Naive thymus-derived CD4-positive, alpha-beta T cell (primary cell): ENCODE measurements at regions of chr9 and their contacts with region 1.

Region 1: DNA sequence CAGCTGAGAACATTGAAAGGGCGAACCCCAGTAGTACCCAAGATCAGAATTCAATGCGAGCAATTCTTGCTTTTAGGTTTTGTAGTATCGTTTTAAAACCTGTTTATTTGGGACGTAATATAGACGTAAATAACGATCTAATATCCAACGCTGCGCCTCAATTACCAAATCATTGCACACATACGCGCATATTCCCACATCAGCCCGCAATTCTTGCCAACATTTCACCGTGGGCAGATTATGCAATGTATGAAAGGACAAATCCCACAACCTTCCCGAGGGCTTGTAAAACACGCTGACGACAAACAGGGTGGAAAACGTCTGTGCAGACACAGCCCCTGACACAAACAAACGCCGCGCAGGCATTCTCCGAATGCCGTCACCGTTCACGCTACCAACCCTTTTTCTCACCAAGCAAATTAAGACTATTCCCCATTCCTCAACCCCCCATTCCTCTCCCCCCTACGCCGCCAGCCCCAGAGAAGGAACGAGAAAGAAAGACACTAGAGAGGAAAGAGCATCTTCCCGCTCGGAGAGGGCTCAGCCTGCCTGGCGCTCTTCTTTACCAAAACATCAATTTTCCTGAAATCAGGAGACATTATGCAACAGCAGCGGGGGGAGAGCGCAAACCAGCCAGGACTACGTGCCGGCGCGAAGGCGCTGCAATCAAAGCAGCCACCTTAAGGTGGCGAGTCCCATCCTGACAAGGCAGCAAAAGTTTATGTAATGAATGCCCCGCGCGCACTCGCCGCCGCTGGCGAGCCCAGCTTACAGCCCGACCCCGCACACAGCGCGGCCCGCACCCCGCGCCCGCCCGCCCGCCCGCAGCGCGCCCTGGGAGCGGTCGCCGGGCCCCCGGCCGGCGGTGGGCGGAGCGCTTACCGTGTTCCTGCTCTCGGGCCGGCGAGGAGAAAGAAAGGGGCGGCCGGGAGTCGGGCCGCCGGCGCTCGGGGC is 597 bp downstream of the NFIL3 start:
- DNase-seq: peak; percentile 50 to 70 (median 61)
- ATAC-seq: peak; percentile 54
- H3K4me3 ChIP-seq: peak overlapping the region; percentile 55
- H3K4me3 Mint-ChIP-seq: peak overlapping the region; percentile 86 to 97 (median 92)
- H3K27ac ChIP-seq: peak overlapping the region; percentile 54
- H3K27ac Mint-ChIP-seq: peak overlapping the region; percentile 5 to 98 (median 61)
- H3K4me1 ChIP-seq: peaks cover 20 to 25% of the 10 kb centered on the region in 2 donors
- H3K4me1 Mint-ChIP-seq: peaks cover 18 to 63% (median 45%) of the 10 kb centered on the region in 7 donors
- H3K27me3 ChIP-seq: peaks cover 0 to 12% of the 10 kb centered on the region in 2 donors
- H3K27me3 Mint-ChIP-seq: peaks cover 0 to 35% (median 21%) of the 10 kb centered on the region in 5 donors

Region 2: GRCh38 chr9:90914868-90915483 is 508.1 kb before region 1 on chr9:
- CTCF ChIA-PET with region 1: interaction called, 73 read pairs
- POLR2A ChIA-PET with region 1: no interaction called
- intact Hi-C with region 1: loop called (anchors 1 kb)
- DNase-seq: peak; percentile 37 to 71 (median 61)
- ATAC-seq: peak; percentile 90
- H3K4me3 ChIP-seq: no peak overlapping the region
- H3K4me3 Mint-ChIP-seq: no peak overlapping the region
- H3K27ac ChIP-seq: no peak overlapping the region
- H3K27ac Mint-ChIP-seq: peak overlapping the region in 1 of 9 donors; percentile 60
- H3K4me1 ChIP-seq: no peaks in the 10 kb centered on the region
- H3K4me1 Mint-ChIP-seq: peaks cover 0 to 2% (median 0%) of the 10 kb centered on the region in 7 donors
- H3K27me3 ChIP-seq: no peaks in the 10 kb centered on the region
- H3K27me3 Mint-ChIP-seq: no peaks in the 10 kb centered on the region

Region 3: GRCh38 chr9:91089405-91090129 is 333.5 kb before region 1 on chr9:
- CTCF ChIA-PET with region 1: no interaction called
- POLR2A ChIA-PET with region 1: no interaction called
- intact Hi-C with region 1: loop called in 1 of 2 experiments (anchors 2 kb)
- DNase-seq: no peak
- ATAC-seq: no peak
- H3K4me3 ChIP-seq: no peak overlapping the region
- H3K4me3 Mint-ChIP-seq: peak overlapping the region in 1 of 10 donors; percentile 15
- H3K27ac ChIP-seq: no peak overlapping the region
- H3K27ac Mint-ChIP-seq: peak overlapping the region in 2 of 9 donors; percentile 21 to 28
- H3K4me1 ChIP-seq: no peaks in the 10 kb centered on the region
- H3K4me1 Mint-ChIP-seq: peaks cover 0 to 53% (median 0%) of the 10 kb centered on the region in 7 donors
- H3K27me3 ChIP-seq: no peaks in the 10 kb centered on the region
- H3K27me3 Mint-ChIP-seq: peaks cover 0 to 4% (median 0%) of the 10 kb centered on the region in 5 donors

Region 4: GRCh38 chr9:91193658-91194391 is 229.2 kb before region 1 on chr9:
- CTCF ChIA-PET with region 1: interaction called, 4 read pairs
- POLR2A ChIA-PET with region 1: no interaction called
- intact Hi-C with region 1: loop called (anchors 1 kb)
- DNase-seq: peak; percentile 48 to 90 (median 68)
- ATAC-seq: peak; percentile 68
- H3K4me3 ChIP-seq: peak overlapping the region; percentile 75
- H3K4me3 Mint-ChIP-seq: peak overlapping the region; percentile 77 to 94 (median 90)
- H3K27ac ChIP-seq: peak overlapping the region; percentile 30
- H3K27ac Mint-ChIP-seq: peak overlapping the region; percentile 76 to 99 (median 92)
- H3K4me1 ChIP-seq: peaks cover 20% of the 10 kb centered on the region in 2 donors
- H3K4me1 Mint-ChIP-seq: peaks cover 6 to 80% (median 34%) of the 10 kb centered on the region in 7 donors
- H3K27me3 ChIP-seq: no peaks in the 10 kb centered on the region
- H3K27me3 Mint-ChIP-seq: no peaks in the 10 kb centered on the region

Region 5: GRCh38 chr9:91395553-91396471 is 27.2 kb before region 1 on chr9:
- CTCF ChIA-PET with region 1: no interaction called
- POLR2A ChIA-PET with region 1: no interaction called
- intact Hi-C with region 1: loop called in 1 of 2 experiments (anchors 2 kb)
- DNase-seq: peak in 1 of 9 donors; percentile 32
- ATAC-seq: peak; percentile 27
- H3K4me3 ChIP-seq: no peak overlapping the region
- H3K4me3 Mint-ChIP-seq: peak overlapping the region in 1 of 10 donors; percentile 68
- H3K27ac ChIP-seq: no peak overlapping the region
- H3K27ac Mint-ChIP-seq: peak overlapping the region in 1 of 9 donors; percentile 77
- H3K4me1 ChIP-seq: no peaks in the 10 kb centered on the region
- H3K4me1 Mint-ChIP-seq: peaks cover 0 to 20% (median 0%) of the 10 kb centered on the region in 7 donors
- H3K27me3 ChIP-seq: no peaks in the 10 kb centered on the region
- H3K27me3 Mint-ChIP-seq: peaks cover 0 to 3% (median 0%) of the 10 kb centered on the region in 5 donors

Region 6: DNA sequence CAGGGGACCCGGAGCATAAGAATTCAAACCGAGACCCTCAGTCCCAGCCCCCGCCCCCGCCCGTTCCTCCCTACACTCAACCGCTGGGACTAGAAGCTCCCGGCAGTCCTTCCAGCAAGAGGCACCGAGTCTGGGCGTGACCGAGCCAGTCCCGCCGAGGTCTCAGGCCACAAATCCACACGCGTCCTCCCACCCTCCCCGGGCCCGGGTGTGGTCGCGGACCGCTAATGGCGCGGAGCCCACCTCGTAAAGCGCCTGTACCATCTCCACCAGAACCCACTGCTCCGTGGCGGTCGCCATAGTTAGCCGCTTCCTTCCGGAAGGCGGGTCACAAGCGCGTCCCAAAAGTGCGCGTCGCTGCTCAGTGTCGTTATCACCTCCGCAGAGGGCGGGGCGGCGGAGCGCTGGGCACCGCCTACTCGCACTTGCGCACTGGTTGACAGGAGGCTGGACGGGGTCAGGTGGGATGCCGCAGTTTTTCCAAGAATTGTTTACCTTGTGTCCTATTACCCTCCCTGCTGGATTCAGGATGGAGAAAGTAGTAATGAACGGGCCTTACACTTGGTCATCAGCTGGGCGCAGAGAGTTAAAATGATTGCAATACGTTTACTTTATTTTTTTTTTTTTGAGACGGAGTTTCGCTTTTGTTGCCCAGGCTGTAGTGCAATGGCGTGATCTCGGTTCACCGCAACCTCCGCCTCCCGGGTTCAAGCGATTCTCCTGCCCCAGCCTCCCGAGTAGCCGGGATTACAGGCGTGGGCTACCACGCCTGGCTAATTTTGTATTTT is 692.2 kb after region 1 on chr9 and contains the start of gene SPTLC1:
- CTCF ChIA-PET with region 1: no interaction called
- POLR2A ChIA-PET with region 1: interaction called, 3 read pairs
- intact Hi-C with region 1: loop called in 1 of 2 experiments (anchors 5 kb)
- DNase-seq: peak; percentile 89 to 97 (median 94)
- ATAC-seq: peak; percentile 99
- H3K4me3 ChIP-seq: peak within 1 kb of the TSS; percentile 85
- H3K4me3 Mint-ChIP-seq: peak within 1 kb of the TSS; percentile 91 to 99 (median 97)
- H3K27ac ChIP-seq: peak within 1 kb of the TSS; percentile 96
- H3K27ac Mint-ChIP-seq: peak within 1 kb of the TSS; percentile 96 to 100 (median 98)
- H3K4me1 ChIP-seq: peaks cover 17 to 20% of the 10 kb centered on the region in 2 donors
- H3K4me1 Mint-ChIP-seq: peaks cover 17 to 51% (median 42%) of the 10 kb centered on the region in 7 donors
- H3K27me3 ChIP-seq: no peaks in the 10 kb centered on the region
- H3K27me3 Mint-ChIP-seq: peaks cover 0 to 2% (median 0%) of the 10 kb centered on the region in 5 donors
- total RNA-seq, gene SPTLC1: 45.6 to 64.0 (median 51.0) TPM